Activated naive CD8-positive, alpha-beta T cell treated with anti-CD3 and anti-CD28 coated beads, Interleukin-2, amount 10 ng/mL, durations not matched to agents 7 days and 5 days (primary cell): ENCODE measurements at regions of chr4 and their contacts with region 1.

Region 1: DNA sequence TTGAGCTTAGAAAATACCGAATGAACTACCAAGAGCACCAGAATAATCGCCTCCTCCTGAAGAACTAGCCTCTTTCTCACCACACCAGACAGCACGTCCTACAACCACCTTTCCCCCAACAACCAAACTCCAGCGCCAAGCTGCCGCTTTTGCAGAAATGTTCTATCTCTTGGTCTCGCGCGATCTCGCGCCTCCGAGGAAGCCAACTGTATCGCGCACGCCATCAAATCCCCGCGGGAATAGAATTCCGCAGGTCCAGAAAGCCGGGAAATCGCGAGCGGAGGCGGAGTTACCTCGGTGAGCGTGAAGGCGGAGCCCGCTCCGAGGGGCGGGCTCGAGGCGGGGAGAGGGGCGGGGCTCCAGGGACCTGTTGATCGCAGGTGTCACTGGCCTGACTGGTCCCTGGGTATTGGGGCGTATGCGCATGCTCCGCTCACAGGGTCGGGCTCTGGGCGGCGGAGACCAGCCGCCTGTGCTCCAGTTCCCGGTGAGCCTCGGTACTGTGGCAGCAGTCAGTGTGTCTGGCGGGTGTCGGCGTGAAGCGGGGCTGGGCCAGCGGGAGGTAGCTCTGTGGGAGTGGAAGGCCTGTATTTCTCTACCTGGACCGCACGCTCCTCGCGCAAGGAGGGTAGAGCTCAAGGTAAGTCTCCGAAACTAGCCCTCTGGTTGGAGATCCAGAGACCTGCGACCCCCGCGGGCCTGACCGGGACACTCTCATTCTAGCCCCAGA is at the start of gene USP53:
- DNase-seq: peak; percentile 95
- ATAC-seq: peak; percentile 96
- H3K4me3 Mint-ChIP-seq: peak within 1 kb of the TSS; percentile 89
- H3K27ac Mint-ChIP-seq: peak within 1 kb of the TSS; percentile 95
- H3K4me1 Mint-ChIP-seq: peaks cover 25% of the 10 kb centered on the region
- H3K27me3 Mint-ChIP-seq: peaks cover 3% of the 10 kb centered on the region
- total RNA-seq, gene USP53: 13.3 to 15.1 TPM

Region 2: DNA sequence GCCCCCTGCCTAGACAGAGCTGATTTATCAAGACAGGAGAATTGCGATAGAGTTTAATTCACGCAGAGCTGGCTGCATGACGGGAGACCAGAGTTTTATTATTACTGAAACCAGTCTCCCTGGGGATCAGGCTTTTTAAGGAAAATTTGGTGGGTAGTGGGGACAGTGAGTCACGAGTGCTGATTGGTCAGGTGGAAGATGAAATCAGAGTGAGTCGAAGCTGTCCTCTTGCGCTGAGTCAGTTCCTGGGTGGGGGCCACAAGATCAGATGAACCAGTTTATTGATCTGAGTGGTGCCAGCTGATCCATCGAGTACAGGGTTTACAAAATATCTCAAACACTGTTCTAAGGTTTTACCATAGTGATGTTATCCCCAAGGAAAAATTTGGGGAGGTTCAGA is 40.2 kb before region 1 on chr4:
- POLR2A ChIA-PET with region 1: no interaction called
- DNase-seq: no peak
- ATAC-seq: no peak
- H3K4me3 Mint-ChIP-seq: no peak overlapping the region
- H3K27ac Mint-ChIP-seq: no peak overlapping the region
- H3K4me1 Mint-ChIP-seq: no peaks in the 10 kb centered on the region
- H3K27me3 Mint-ChIP-seq: no peaks in the 10 kb centered on the region

Region 3: GRCh38 chr4:119197772-119198212 is 14.6 kb before region 1 on chr4:
- POLR2A ChIA-PET with region 1: no interaction called
- DNase-seq: no peak
- ATAC-seq: no peak
- H3K4me3 Mint-ChIP-seq: no peak overlapping the region
- H3K27ac Mint-ChIP-seq: no peak overlapping the region
- H3K4me1 Mint-ChIP-seq: no peaks in the 10 kb centered on the region
- H3K27me3 Mint-ChIP-seq: no peaks in the 10 kb centered on the region

Region 4: DNA sequence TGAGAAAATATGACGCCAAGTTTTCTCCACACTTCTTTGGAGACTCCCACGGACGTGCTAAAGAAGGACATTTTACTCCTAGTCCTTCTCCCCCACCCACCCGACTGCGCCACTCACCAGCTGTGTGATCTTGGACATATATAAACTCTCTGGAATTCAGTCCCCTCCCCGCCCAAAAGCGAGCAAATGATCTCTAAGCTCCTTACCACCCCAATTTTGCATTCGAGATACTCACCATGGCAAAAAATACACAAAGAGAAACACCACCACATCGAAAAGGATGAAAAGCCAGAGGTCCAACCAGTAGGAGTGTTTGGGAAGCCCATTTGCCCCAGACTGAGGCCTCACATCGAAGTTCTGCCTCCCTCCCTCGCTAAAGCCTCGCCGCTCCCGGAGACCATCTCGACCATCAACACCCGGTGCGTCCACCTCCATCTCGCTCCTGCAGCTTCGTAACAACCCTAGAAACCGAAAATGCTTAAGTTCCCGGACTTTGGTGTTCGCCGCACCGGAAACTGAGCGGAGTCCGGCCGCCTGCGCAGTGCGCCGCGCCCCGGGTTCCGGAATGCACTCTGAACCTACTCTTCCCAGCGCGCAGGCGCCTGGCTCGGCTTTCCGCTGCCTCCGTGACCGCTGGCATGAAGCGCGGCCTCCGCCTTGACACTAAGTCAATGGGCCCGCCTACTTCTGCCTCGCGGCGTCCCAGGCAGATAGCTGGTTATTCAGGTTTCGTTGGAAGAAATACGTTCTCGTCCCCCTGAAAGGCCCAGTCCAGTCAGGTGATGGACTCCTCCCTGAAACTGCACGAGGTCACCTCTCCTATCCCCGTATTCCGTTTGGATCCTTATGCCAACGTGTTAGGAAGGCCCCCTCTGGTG is 87.9 kb after region 1 on chr4:
- POLR2A ChIA-PET with region 1: interaction called, 39 read pairs
- DNase-seq: peak; percentile 92
- ATAC-seq: peak; percentile 99
- H3K4me3 Mint-ChIP-seq: peak overlapping the region; percentile 95
- H3K27ac Mint-ChIP-seq: peak overlapping the region; percentile 94
- H3K4me1 Mint-ChIP-seq: peaks cover 31% of the 10 kb centered on the region
- H3K27me3 Mint-ChIP-seq: peaks cover under 1% of the 10 kb centered on the region